MCF 10A (cell line): ENCODE measurements at regions of chr1 and their contacts with region 1.

Region 1: DNA sequence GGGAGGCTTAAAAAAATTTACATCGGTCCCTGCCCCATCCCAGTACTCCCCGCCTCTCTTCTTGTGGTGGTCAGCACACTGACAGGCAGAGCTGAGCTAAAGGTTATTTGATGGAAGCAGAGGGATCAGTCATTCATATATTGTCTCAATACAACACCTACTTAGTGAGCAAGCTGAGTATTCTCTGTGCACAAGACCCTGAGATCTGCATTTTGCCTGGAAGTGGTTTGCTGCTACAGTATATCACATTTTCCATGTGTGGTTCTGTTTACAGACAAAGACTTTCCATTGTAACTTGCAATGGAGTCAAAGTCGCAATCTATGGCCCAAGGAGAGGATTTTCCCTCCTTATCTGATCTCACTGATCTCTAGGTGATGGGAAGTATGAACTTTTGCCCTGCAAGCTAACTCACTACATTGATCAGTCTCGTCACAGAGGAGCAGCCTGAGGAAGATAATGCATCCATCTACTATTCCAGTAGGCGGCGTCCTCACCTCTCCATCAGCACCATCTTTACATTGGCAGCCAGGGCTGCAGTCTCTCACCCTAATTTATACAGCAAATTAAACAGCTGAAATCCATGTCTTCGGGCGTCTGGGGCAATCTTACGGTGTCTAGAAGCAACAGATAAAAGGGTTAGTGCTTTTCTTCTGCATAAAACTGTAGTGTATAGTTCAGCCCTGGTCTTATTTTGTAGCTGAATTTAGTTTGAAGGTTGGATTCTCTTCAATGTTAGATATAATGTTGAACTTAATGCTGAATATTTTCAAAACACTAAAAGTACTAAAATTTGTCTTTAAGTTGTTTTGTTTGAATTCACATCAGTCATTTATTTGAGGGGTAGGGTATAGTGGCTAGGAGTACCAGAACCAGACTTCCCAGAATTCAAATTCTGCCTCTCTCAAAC is 3.2 kb upstream of the TRAF5 start:
- DNase-seq: peak; percentile 88
- H3K4me3 Mint-ChIP-seq: no peak overlapping the region
- H3K27ac Mint-ChIP-seq: no peak overlapping the region
- H3K4me1 Mint-ChIP-seq: peaks cover 15% of the 10 kb centered on the region
- H3K27me3 Mint-ChIP-seq: no peaks in the 10 kb centered on the region
- CTCF ChIP-seq: peak; percentile 98

Region 2: DNA sequence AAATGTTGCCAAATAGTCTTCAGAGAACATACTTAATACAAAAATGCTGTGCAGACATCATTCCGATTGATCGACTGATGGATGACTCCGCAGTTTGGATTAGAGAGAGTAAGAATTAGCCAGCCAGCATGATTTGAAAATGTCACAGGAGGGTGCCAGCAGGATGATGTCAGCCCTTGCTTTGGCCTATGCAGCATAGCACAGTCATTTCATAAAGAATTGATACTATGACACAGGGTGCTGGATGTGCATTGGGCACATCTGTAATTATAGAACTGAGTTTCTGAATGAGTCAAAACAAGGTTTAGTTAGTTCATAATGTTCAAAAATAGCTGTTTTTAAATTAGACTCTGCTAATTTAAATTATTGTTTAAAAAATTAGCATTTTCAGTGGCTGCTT is 18.4 kb before region 1 on chr1:
- CTCF ChIA-PET with region 1: interaction called, 20 read pairs
- POLR2A ChIA-PET with region 1: no interaction called
- intact Hi-C with region 1: no loop called
- DNase-seq: no peak
- H3K4me3 Mint-ChIP-seq: no peak overlapping the region
- H3K27ac Mint-ChIP-seq: no peak overlapping the region
- H3K4me1 Mint-ChIP-seq: peaks cover 14% of the 10 kb centered on the region
- H3K27me3 Mint-ChIP-seq: no peaks in the 10 kb centered on the region
- CTCF ChIP-seq: no peak

Region 3: GRCh38 chr1:211345719-211346118 is 22.3 kb after region 1 on chr1:
- CTCF ChIA-PET with region 1: interaction called, 153 read pairs
- POLR2A ChIA-PET with region 1: interaction called, 3 read pairs
- intact Hi-C with region 1: no loop called
- DNase-seq: no peak
- H3K4me3 Mint-ChIP-seq: no peak overlapping the region
- H3K27ac Mint-ChIP-seq: no peak overlapping the region
- H3K4me1 Mint-ChIP-seq: peaks cover 12% of the 10 kb centered on the region
- H3K27me3 Mint-ChIP-seq: no peaks in the 10 kb centered on the region
- CTCF ChIP-seq: no peak

Region 4: DNA sequence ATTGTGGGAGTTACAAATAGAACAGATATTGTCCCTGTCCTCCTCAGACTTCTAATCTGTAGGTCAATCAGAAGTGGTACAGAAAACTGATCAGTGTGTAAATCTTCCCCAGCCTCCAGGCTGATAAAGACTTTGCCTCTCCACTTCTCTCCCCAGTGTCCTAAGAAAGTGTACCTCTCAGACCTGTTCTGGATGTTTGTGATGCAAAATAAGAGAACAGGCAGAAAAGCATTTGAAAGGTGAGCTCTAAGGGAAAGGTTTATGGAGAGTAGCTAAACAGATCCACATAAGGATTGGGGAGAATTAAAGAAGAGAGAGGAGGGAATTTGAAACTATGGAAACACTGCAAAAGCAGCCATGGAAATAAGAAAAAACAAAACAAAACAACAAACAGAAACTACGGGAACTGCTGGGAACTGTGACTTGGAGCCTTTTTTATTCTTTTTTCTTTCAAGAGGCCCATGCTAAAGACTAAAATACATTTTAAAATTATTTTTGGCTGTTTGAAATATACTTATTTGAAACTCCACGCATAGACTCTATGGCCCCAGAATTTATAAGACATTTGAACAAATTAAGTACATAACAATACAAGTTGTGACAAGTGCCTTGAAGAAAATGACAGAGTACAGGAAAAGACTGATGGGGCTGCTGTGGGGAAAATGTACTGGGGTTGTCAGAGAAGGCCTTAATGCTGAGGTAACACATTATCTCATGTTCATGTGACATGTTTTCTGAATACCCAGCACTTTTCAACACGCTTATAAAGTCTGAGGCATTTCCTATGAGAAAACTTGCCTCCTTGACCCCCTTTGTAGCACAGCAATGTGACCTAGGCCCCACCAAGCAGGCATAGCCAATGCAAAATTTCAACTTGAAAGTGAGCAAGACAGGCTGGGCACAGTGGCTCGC is 54.4 kb after region 1 on chr1:
- CTCF ChIA-PET with region 1: interaction called, 27 read pairs
- POLR2A ChIA-PET with region 1: interaction called, 18 read pairs
- intact Hi-C with region 1: loop called (anchors 1 kb)
- DNase-seq: no peak
- H3K4me3 Mint-ChIP-seq: no peak overlapping the region
- H3K27ac Mint-ChIP-seq: peak overlapping the region; percentile 1
- H3K4me1 Mint-ChIP-seq: peaks cover 32% of the 10 kb centered on the region
- H3K27me3 Mint-ChIP-seq: no peaks in the 10 kb centered on the region
- CTCF ChIP-seq: no peak

Region 5: DNA sequence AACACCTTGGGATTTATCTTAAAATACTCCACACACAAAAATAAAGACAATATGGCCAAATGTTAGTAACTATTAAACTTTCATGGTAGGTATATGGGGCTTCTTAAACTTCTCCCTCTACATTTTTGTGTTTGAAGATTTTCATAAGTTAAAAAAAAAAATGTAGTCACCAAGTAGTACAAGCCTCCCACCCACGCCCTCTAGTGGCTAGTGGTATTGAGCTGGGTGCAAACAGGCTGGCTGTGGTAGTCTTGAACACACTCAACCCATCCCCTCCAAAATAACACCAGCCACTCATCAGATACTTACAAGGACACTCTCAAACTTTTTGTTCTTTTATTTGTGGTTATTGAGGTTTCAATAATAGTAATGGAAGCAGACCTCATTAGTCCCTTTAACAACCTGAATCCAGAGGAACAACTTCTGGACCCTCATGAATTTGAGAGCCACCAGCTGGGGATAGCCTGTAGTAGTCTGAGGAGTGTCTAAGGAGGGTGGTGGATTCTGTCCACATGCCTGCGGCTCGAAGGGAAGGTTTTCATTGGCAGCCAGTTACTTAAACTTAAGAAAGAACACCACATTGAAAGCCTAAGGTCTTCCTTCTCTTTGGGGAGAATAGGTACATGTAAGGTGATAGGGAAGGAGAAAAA is 152.9 kb after region 1 on chr1:
- CTCF ChIA-PET with region 1: interaction called, 167 read pairs
- POLR2A ChIA-PET with region 1: interaction called, 3 read pairs
- intact Hi-C with region 1: loop called (anchors 1 kb)
- DNase-seq: peak; percentile 93
- H3K4me3 Mint-ChIP-seq: no peak overlapping the region
- H3K27ac Mint-ChIP-seq: no peak overlapping the region
- H3K4me1 Mint-ChIP-seq: peaks cover 8% of the 10 kb centered on the region
- H3K27me3 Mint-ChIP-seq: no peaks in the 10 kb centered on the region
- CTCF ChIP-seq: peak; percentile 98

Region 6: GRCh38 chr1:211520641-211521040 is 197.2 kb after region 1 on chr1:
- CTCF ChIA-PET with region 1: interaction called, 308 read pairs
- POLR2A ChIA-PET with region 1: interaction called, 26 read pairs
- intact Hi-C with region 1: no loop called
- DNase-seq: no peak
- H3K4me3 Mint-ChIP-seq: no peak overlapping the region
- H3K27ac Mint-ChIP-seq: no peak overlapping the region
- H3K4me1 Mint-ChIP-seq: peaks cover 9% of the 10 kb centered on the region
- H3K27me3 Mint-ChIP-seq: no peaks in the 10 kb centered on the region
- CTCF ChIP-seq: no peak

Region 7: GRCh38 chr1:211660718-211661222 is 337.4 kb after region 1 on chr1:
- CTCF ChIA-PET with region 1: interaction called, 61 read pairs
- POLR2A ChIA-PET with region 1: no interaction called
- intact Hi-C with region 1: loop called (anchors 1 kb)
- DNase-seq: no peak
- H3K4me3 Mint-ChIP-seq: no peak overlapping the region
- H3K27ac Mint-ChIP-seq: no peak overlapping the region
- H3K4me1 Mint-ChIP-seq: no peaks in the 10 kb centered on the region
- H3K27me3 Mint-ChIP-seq: no peaks in the 10 kb centered on the region
- CTCF ChIP-seq: no peak